ENCODE measurements at regions of chr6 and their contacts with region 1.

Region 1: GRCh38 chr6:99514089-99514488 is 1.1 kb downstream of the USP45 start:
- DNase-seq: no peak
- H3K4me3 ChIP-seq: peak overlapping the region; percentile 68 to 77 (median 74)
- H3K27ac ChIP-seq: no peak overlapping the region
- H3K4me1 ChIP-seq: peaks cover 5 to 22% (median 18%) of the 10 kb centered on the region in 4 donors
- H3K27me3 ChIP-seq: no peaks in the 10 kb centered on the region
- CTCF ChIP-seq: no peak
- EP300 ChIP-seq: no peak
- POLR2A ChIP-seq: no peak

Region 2: GRCh38 chr6:99425647-99426453 is 88.2 kb before region 1 on chr6:
- intact Hi-C with region 1: loop called (anchors 10 kb)
- DNase-seq: peak; percentile 96
- H3K4me3 ChIP-seq: peak overlapping the region; percentile 86 to 96 (median 93)
- H3K27ac ChIP-seq: peak overlapping the region; percentile 96 to 99 (median 97)
- H3K4me1 ChIP-seq: peaks cover 46 to 56% (median 54%) of the 10 kb centered on the region in 4 donors
- H3K27me3 ChIP-seq: no peaks in the 10 kb centered on the region
- CTCF ChIP-seq: peak; percentile 51 to 54 (median 52)
- EP300 ChIP-seq: no peak
- POLR2A ChIP-seq: no peak

Region 3: GRCh38 chr6:99712519-99712918 is 198.4 kb after region 1 on chr6:
- intact Hi-C with region 1: no loop called
- DNase-seq: no peak
- H3K4me3 ChIP-seq: no peak overlapping the region
- H3K27ac ChIP-seq: no peak overlapping the region
- H3K4me1 ChIP-seq: no peaks in the 10 kb centered on the region
- H3K27me3 ChIP-seq: no peaks in the 10 kb centered on the region
- CTCF ChIP-seq: no peak
- EP300 ChIP-seq: no peak
- POLR2A ChIP-seq: no peak

Measured in esophagus muscularis mucosa (tissue), 4 donors.